Endothelial cell of umbilical vein (primary cell): ENCODE measurements at regions of chr9 and their contacts with region 1.

Region 1: GRCh38 chr9:21455320-21455719 is 15.1 kb downstream of the IFNA1 start:
- DNase-seq: peak; percentile 24
- H3K4me3 ChIP-seq: no peak overlapping the region
- H3K27ac ChIP-seq: no peak overlapping the region
- H3K4me1 ChIP-seq: peaks cover 8% of the 10 kb centered on the region
- H3K27me3 ChIP-seq: no peaks in the 10 kb centered on the region
- CTCF ChIP-seq: peak; percentile 47 to 69
- POLR2A ChIP-seq: no peak

Region 2: DNA sequence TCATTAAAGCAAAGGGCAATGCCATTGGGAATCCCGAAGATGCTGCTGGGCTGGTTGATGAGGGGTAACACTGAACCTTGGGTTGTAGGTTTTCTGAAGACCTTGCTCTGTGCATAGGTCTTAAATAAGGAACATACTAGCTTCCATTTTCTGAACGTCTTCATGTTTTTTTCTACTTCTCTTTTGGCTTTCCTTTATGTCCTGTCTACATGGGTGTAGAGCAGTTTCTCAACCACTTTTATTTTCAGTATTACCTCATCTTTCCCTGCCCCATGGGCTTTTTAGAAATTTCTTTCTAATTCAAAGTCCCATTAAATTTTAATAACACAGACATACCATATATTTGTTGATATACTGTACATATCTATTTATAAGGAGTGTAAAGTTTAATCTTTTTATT is 215.4 kb before region 1 on chr9 and contains the start of gene IFNA14:
- CTCF ChIA-PET with region 1: interaction called, 25 read pairs
- POLR2A ChIA-PET with region 1: no interaction called
- dilution Hi-C with region 1: no loop called
- intact Hi-C with region 1: no loop called
- DNase-seq: no peak
- H3K4me3 ChIP-seq: no peak within 1 kb of the TSS
- H3K27ac ChIP-seq: no peak within 1 kb of the TSS
- H3K4me1 ChIP-seq: no peaks in the 10 kb centered on the region
- H3K27me3 ChIP-seq: peaks cover 11 to 28% of the 10 kb centered on the region in 2 experiments
- CTCF ChIP-seq: no peak
- POLR2A ChIP-seq: no peak
- total RNA-seq, gene IFNA14: not detected in 2 replicates

Region 3: GRCh38 chr9:21317956-21318923 is 137.1 kb before region 1 on chr9:
- CTCF ChIA-PET with region 1: interaction called, 16 read pairs
- POLR2A ChIA-PET with region 1: no interaction called
- dilution Hi-C with region 1: no loop called
- intact Hi-C with region 1: loop called (anchors 1 kb)
- DNase-seq: peak; percentile 76
- H3K4me3 ChIP-seq: no peak overlapping the region
- H3K27ac ChIP-seq: peak overlapping the region; percentile 20
- H3K4me1 ChIP-seq: peaks cover 13% of the 10 kb centered on the region
- H3K27me3 ChIP-seq: peaks cover 10 to 22% of the 10 kb centered on the region in 2 experiments
- CTCF ChIP-seq: peak; percentile 37 to 61
- POLR2A ChIP-seq: no peak

Region 4: DNA sequence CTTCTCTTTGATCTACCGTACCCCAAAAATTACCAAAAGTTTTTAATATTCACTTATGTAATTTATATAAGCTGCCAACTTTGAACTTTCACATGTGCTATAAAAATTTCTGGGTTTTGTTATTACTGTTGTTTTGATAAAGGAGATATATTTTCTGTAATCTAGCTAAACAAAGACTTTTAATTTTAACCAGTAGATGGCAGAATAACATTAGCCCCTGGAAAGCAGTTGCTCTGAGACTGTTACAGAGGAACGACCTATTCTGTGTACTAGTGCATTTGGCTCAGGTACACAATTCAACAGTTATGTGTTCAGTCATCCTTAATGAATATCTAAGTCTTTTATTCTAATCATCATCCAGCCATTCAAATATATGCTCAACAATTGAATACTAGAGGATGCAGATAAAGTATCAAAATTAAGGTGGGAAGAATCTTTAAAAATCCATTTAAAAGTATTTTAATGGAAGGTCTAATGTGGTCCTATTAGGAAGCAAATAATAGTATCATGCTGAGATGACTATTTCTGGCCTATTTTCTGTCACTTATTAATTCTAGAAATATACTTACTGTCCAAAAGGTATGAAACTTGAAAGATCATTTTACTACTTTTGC is 128.7 kb before region 1 on chr9:
- CTCF ChIA-PET with region 1: interaction called, 10 read pairs
- POLR2A ChIA-PET with region 1: no interaction called
- dilution Hi-C with region 1: no loop called
- intact Hi-C with region 1: no loop called
- DNase-seq: peak; percentile 54
- H3K4me3 ChIP-seq: no peak overlapping the region
- H3K27ac ChIP-seq: no peak overlapping the region
- H3K4me1 ChIP-seq: peaks cover 15% of the 10 kb centered on the region
- H3K27me3 ChIP-seq: no peaks in the 10 kb centered on the region
- CTCF ChIP-seq: peak; percentile 33 to 46
- POLR2A ChIP-seq: no peak

Region 5: GRCh38 chr9:21357479-21358460 is 97.5 kb before region 1 on chr9:
- CTCF ChIA-PET with region 1: no interaction called
- POLR2A ChIA-PET with region 1: no interaction called
- dilution Hi-C with region 1: no loop called
- intact Hi-C with region 1: no loop called
- DNase-seq: no peak
- H3K4me3 ChIP-seq: no peak overlapping the region
- H3K27ac ChIP-seq: no peak overlapping the region
- H3K4me1 ChIP-seq: no peaks in the 10 kb centered on the region
- H3K27me3 ChIP-seq: peaks cover 7 to 19% of the 10 kb centered on the region in 2 experiments
- CTCF ChIP-seq: no peak
- POLR2A ChIP-seq: no peak

Region 6: DNA sequence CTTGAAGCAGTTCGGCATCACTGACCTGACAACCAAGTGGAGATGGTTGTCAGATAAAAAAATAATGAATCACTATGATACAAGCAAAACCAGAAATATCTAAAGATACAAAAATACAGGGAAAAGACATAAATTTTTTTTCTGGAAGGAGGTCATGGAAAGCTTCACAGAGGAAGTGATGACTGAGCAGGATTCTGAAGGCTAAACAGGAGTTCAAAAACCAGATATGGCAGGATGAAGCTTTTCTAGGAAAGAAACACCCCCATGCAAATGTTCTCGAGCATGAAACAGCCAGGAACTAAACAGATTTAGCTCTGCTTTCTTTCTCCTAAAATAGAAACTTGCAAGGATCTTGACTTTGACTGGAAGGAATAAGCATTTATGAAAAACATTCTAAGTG is 87.5 kb after region 1 on chr9:
- CTCF ChIA-PET with region 1: no interaction called
- POLR2A ChIA-PET with region 1: no interaction called
- dilution Hi-C with region 1: no loop called
- intact Hi-C with region 1: no loop called
- DNase-seq: peak; percentile 59
- H3K4me3 ChIP-seq: no peak overlapping the region
- H3K27ac ChIP-seq: peak overlapping the region; percentile 32
- H3K4me1 ChIP-seq: peaks cover 21% of the 10 kb centered on the region
- H3K27me3 ChIP-seq: no peaks in the 10 kb centered on the region
- CTCF ChIP-seq: no peak
- POLR2A ChIP-seq: no peak